Right ventricle myocardium inferior (tissue), 1 donor: ENCODE measurements at regions of chr14 and their contacts with region 1.

Region 1: GRCh38 chr14:33792720-33793368 is 158.0 kb downstream of the EGLN3 start:
- DNase-seq: peak; percentile 84
- ATAC-seq: peak; percentile 85

Region 2: DNA sequence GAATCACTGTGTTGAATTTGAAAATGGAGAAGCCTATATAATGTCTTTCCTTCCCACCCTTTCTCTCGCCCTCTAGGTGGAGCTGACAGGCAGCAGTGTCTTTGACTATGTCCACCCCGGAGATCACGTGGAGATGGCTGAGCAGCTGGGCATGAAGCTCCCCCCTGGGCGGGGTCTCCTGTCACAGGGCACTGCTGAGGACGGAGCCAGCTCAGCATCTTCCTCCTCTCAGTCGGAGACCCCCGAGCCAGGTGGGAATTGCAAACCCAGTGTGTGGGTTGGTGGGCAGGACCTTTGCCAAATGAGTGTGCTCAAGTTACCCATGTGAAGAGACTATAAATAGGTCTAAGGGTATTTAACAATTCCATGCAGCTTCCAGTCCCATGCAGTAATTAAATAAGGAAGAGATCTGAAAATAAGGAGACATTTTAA is 116.7 kb before region 1 on chr14:
- intact Hi-C with region 1: loop called (anchors 5 kb)
- DNase-seq: peak; percentile 65
- ATAC-seq: no peak

Region 3: GRCh38 chr14:33916663-33917565 is 124.1 kb after region 1 on chr14:
- intact Hi-C with region 1: no loop called
- DNase-seq: no peak
- ATAC-seq: peak; percentile 69